ENCODE measurements at regions of chr7 and their contacts with region 1.

Region 1: GRCh38 chr7:17940302-17940883 is at the start of gene SNX13:
- DNase-seq: peak; percentile 86
- H3K4me3 Mint-ChIP-seq: peak within 1 kb of the TSS; percentile 92
- H3K27ac Mint-ChIP-seq: peak within 1 kb of the TSS; percentile 93
- H3K4me1 Mint-ChIP-seq: peaks cover 36% of the 10 kb centered on the region
- H3K27me3 Mint-ChIP-seq: peaks cover 7% of the 10 kb centered on the region
- total RNA-seq, gene SNX13: 27.3 and 27.6 TPM in 2 replicates

Region 2: GRCh38 chr7:16420649-16421332 is 1519.6 kb before region 1 on chr7:
- intact Hi-C with region 1: loop called (anchors 5 kb)
- DNase-seq: peak; percentile 80
- H3K4me3 Mint-ChIP-seq: peak overlapping the region; percentile 87
- H3K27ac Mint-ChIP-seq: peak overlapping the region; percentile 82
- H3K4me1 Mint-ChIP-seq: peaks cover 22% of the 10 kb centered on the region
- H3K27me3 Mint-ChIP-seq: no peaks in the 10 kb centered on the region

Region 3: GRCh38 chr7:16926283-16926682 is 1014.1 kb before region 1 on chr7:
- intact Hi-C with region 1: loop called (anchors 5 kb)
- DNase-seq: no peak
- H3K4me3 Mint-ChIP-seq: no peak overlapping the region
- H3K27ac Mint-ChIP-seq: no peak overlapping the region
- H3K4me1 Mint-ChIP-seq: peaks cover 49% of the 10 kb centered on the region
- H3K27me3 Mint-ChIP-seq: no peaks in the 10 kb centered on the region

Region 4: DNA sequence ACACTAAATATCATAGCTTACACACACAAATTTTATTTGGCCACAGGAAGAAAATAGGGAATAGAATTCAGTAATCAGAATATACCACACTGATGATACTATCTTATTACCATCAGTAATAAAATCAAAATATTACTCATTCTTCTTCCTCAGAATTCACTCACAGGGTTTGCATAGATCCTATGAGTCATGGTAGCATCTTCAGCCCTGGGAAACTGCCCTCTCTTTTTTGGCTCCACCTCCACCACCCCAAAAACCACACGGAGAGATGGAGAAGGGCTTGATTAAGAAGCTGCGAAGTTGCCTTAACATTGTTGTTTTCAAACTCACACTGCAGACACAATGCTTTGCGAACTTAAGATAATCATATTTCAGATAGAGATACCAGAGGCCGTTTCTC is 796.1 kb before region 1 on chr7:
- intact Hi-C with region 1: loop called (anchors 10 kb)
- DNase-seq: peak; percentile 49
- H3K4me3 Mint-ChIP-seq: peak overlapping the region; percentile 1
- H3K27ac Mint-ChIP-seq: peak overlapping the region; percentile 25
- H3K4me1 Mint-ChIP-seq: peaks cover 46% of the 10 kb centered on the region
- H3K27me3 Mint-ChIP-seq: no peaks in the 10 kb centered on the region

Region 5: GRCh38 chr7:17769918-17770317 is 170.5 kb before region 1 on chr7:
- intact Hi-C with region 1: loop called (anchors 5 kb)
- DNase-seq: peak; percentile 23
- H3K4me3 Mint-ChIP-seq: no peak overlapping the region
- H3K27ac Mint-ChIP-seq: no peak overlapping the region
- H3K4me1 Mint-ChIP-seq: peaks cover 7% of the 10 kb centered on the region
- H3K27me3 Mint-ChIP-seq: peaks cover 4% of the 10 kb centered on the region

Region 6: GRCh38 chr7:17830206-17830605 is 110.2 kb before region 1 on chr7:
- intact Hi-C with region 1: no loop called
- DNase-seq: no peak
- H3K4me3 Mint-ChIP-seq: no peak overlapping the region
- H3K27ac Mint-ChIP-seq: no peak overlapping the region
- H3K4me1 Mint-ChIP-seq: no peaks in the 10 kb centered on the region
- H3K27me3 Mint-ChIP-seq: no peaks in the 10 kb centered on the region

Region 7: GRCh38 chr7:17871815-17872533 is 68.4 kb before region 1 on chr7:
- intact Hi-C with region 1: loop called (anchors 2 kb)
- DNase-seq: no peak
- H3K4me3 Mint-ChIP-seq: no peak overlapping the region
- H3K27ac Mint-ChIP-seq: no peak overlapping the region
- H3K4me1 Mint-ChIP-seq: peaks cover 13% of the 10 kb centered on the region
- H3K27me3 Mint-ChIP-seq: no peaks in the 10 kb centered on the region

Region 8: DNA sequence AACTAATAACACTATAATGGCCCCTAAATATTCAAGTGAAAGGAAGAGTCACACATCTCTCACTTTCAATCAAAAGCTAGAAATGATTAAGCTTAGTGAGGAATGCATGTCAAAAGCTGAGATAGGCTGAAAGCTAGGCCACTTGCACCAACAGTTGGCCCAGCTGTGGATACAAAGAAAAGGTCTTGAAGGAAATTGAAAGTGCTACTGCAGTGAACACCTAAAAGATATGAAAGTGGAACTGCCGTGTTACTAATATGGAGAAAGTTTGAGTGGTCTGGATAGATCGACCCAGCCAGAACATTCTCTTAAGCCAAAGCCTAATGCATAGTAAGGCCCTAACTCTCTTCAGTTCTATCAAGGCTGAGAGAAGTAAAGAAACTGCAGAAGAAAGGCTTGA is 12.0 kb after region 1 on chr7:
- intact Hi-C with region 1: loop called (anchors 1 kb)
- DNase-seq: no peak
- H3K4me3 Mint-ChIP-seq: peak overlapping the region; percentile 31
- H3K27ac Mint-ChIP-seq: no peak overlapping the region
- H3K4me1 Mint-ChIP-seq: peaks cover 17% of the 10 kb centered on the region
- H3K27me3 Mint-ChIP-seq: peaks cover 21% of the 10 kb centered on the region